Activated B cell treated with CpG ODN at 0.5 μM for 24 hours (primary cell): ENCODE measurements at regions of chr3 and their contacts with region 1.

Region 1: GRCh38 chr3:187066228-187066995 is 72.9 kb downstream of the RPL39L start:
- DNase-seq: no peak
- ATAC-seq: peak; percentile 39
- H3K4me3 Mint-ChIP-seq: peak overlapping the region; percentile 68
- H3K27ac Mint-ChIP-seq: peak overlapping the region; percentile 92
- H3K4me1 Mint-ChIP-seq: peaks cover 97% of the 10 kb centered on the region
- H3K27me3 Mint-ChIP-seq: no peaks in the 10 kb centered on the region
- CTCF ChIP-seq: no peak

Region 2: DNA sequence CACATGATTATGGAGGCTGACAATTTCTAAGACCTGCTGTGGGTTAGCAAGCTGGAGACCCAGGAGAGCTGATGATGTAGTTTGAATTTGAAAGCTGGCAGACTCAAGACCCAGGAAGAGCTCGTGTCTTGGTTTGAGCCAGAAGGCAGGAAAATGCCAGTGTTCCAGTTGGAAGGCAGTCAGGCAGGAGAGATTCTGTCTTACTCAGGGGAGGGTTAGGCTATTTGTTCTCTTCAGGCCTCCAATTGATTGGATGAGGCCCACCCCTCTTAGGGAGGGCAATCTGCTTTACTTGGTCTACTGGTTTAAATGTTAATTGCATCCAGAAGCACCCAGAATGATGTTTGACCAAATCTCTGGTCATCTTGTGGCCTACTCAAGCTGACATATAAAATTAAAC is 1201.2 kb before region 1 on chr3:
- CTCF ChIA-PET with region 1: no interaction called
- POLR2A ChIA-PET with region 1: no interaction called
- intact Hi-C with region 1: no loop called
- DNase-seq: no peak
- ATAC-seq: no peak
- H3K4me3 Mint-ChIP-seq: no peak overlapping the region
- H3K27ac Mint-ChIP-seq: no peak overlapping the region
- H3K4me1 Mint-ChIP-seq: no peaks in the 10 kb centered on the region
- H3K27me3 Mint-ChIP-seq: peaks cover 5% of the 10 kb centered on the region
- CTCF ChIP-seq: no peak

Region 3: DNA sequence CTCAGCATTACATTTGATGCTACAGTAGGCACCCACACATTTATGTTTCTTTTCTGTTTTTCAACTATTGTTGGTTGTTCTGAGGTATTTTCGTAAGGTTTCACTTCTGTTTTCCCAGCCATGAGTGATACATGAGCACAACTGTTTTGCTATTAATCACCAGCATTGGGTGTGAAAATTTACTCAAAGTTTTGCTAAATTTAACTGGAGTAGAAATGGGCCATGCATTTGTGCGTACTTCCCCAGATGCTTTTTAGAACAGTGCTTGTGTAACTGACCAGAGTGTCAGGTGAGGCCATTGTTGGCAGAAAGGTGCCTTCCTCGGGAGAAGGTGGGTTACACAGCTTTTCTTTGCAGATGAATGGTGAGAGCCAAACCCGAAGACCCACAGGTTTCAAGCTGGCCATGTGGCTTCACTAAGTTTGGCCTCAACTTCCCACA is 65.7 kb before region 1 on chr3:
- CTCF ChIA-PET with region 1: no interaction called
- POLR2A ChIA-PET with region 1: interaction called, 6 read pairs
- intact Hi-C with region 1: loop called (anchors 1 kb)
- DNase-seq: peak; percentile 43
- ATAC-seq: peak; percentile 66
- H3K4me3 Mint-ChIP-seq: peak overlapping the region; percentile 72
- H3K27ac Mint-ChIP-seq: peak overlapping the region; percentile 89
- H3K4me1 Mint-ChIP-seq: peaks cover 94% of the 10 kb centered on the region
- H3K27me3 Mint-ChIP-seq: no peaks in the 10 kb centered on the region
- CTCF ChIP-seq: no peak

Region 4: DNA sequence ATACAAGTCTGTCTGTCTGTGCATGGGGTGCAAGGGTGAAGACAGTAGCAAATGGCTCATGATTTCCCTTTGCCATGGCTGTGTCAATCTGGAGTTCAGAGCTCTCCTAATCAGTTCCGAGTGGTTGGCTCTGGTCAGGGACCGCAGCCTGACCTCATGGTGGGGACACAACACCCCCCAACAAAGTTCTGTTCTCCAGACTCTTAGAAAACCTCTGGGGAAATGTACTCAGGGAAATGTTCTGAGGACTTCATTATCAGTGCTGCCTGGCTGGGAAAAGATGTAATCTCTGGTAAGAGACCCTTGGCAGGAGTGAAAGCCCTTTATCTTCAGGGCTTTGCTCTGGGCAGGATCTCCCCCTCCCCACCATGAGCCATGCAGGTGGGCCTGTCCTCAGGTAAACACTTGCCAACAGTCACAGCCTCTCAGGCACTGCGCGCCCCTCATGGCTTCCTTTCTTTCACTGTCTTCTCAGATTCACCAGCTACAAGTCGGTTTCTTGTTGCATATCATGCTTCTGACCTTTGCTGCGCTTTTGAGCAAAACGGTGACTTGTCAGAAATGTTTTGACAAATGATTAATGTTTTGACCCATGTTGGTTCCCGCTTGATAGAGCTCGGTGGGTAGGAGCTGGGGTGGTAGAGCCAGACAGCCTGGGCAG is 40.6 kb before region 1 on chr3:
- CTCF ChIA-PET with region 1: interaction called, 10 read pairs
- POLR2A ChIA-PET with region 1: interaction called, 45 read pairs
- intact Hi-C with region 1: loop called (anchors 1 kb)
- DNase-seq: no peak
- ATAC-seq: peak; percentile 51
- H3K4me3 Mint-ChIP-seq: peak overlapping the region; percentile 84
- H3K27ac Mint-ChIP-seq: peak overlapping the region; percentile 93
- H3K4me1 Mint-ChIP-seq: peaks cover 93% of the 10 kb centered on the region
- H3K27me3 Mint-ChIP-seq: no peaks in the 10 kb centered on the region
- CTCF ChIP-seq: no peak

Region 5: DNA sequence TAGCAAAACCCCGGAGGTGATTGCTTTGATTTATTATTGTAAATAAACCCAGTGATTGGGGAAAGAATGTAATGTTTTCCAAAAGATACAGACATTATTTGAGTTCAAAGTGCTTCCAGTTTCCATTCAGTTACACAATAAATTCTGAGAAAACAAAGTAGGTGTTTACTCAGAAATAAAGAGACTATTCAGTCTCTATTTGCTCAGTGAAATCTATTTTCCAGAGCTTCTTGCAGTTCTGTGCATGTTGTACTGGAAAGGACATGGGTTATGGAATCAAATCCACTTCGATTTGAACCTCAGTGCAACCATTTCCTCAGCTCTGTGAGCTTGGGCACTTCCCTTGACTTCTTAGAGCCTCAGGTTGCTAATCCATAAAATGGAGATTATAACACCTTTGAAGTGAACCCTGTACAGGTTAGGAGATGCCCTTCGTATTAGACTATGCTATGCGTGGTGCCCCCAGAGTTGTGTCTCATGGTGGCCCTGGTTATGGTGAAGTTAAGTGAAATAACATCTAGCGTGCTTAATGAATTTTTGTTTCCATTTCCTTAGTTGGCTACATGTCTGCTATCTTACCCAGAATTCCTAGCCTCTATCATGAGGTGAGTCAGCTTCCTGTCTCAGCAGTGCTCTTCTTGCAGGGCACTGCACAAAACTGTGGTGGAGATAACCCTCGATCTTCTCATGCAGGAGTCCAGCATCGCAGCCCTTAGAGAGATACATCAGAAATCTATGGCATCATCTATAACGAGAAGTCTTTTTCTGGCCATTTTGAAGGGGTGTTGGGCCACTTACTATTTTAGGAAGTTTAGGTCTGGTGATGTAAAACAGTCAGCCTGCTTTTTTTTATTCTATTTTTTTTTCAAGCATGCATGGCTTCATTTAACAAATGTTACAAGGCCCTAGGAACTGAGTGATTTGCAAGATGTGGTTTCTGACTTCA is 24.8 kb before region 1 on chr3:
- CTCF ChIA-PET with region 1: interaction called, 6 read pairs
- POLR2A ChIA-PET with region 1: interaction called, 80 read pairs
- intact Hi-C with region 1: loop called (anchors 1 kb)
- DNase-seq: no peak
- ATAC-seq: peak; percentile 81
- H3K4me3 Mint-ChIP-seq: peak overlapping the region; percentile 74
- H3K27ac Mint-ChIP-seq: peak overlapping the region; percentile 97
- H3K4me1 Mint-ChIP-seq: peaks cover 83% of the 10 kb centered on the region
- H3K27me3 Mint-ChIP-seq: no peaks in the 10 kb centered on the region
- CTCF ChIP-seq: no peak

Region 6: GRCh38 chr3:187082758-187083375 is 16.5 kb after region 1 on chr3:
- CTCF ChIA-PET with region 1: no interaction called
- POLR2A ChIA-PET with region 1: no interaction called
- intact Hi-C with region 1: no loop called
- DNase-seq: no peak
- ATAC-seq: no peak
- H3K4me3 Mint-ChIP-seq: no peak overlapping the region
- H3K27ac Mint-ChIP-seq: peak overlapping the region; percentile 18
- H3K4me1 Mint-ChIP-seq: peaks cover 2% of the 10 kb centered on the region
- H3K27me3 Mint-ChIP-seq: no peaks in the 10 kb centered on the region
- CTCF ChIP-seq: no peak

Region 7: DNA sequence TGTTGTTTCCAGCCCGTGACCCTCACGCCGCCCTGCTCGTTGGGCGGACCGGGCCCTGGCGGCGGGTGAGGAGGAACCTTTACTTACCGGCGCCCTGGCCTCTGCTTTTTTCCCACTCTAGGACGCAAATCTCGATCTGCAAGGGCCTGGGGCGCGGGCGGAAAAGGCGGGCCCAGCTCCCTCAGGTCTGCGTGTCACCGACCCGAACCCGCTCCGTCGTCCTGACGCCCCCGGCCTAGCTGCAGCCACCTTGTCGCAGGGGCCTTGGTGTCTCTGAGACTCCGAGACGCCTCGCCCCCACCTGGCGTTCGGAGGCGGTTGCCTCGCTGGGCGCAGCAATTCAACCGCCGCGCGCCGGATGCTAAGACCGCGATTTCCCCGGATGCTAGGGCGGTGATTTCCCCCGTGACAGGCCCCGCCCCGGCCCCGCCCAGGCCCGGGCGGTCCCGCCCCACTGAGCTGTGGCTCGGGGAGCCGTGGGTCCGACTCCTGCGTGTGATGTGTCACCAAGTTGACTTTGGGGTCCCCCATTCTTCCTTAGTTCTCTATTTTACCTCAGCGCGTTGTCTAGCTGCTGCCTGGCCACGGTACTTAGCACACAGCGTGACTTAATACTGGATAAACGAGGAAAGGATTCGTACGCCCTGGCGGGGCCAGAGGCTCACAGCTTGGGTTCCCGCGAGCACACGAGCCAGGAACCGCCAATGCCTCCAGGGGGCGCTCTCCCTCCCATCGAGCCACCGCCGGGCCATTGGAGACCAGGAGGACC is 72.9 kb after region 1 on chr3 and contains the start of gene RPL39L:
- CTCF ChIA-PET with region 1: interaction called, 12 read pairs
- POLR2A ChIA-PET with region 1: interaction called, 10 read pairs
- intact Hi-C with region 1: loop called (anchors 5 kb)
- DNase-seq: peak; percentile 95
- ATAC-seq: peak; percentile 95
- H3K4me3 Mint-ChIP-seq: peak within 1 kb of the TSS; percentile 90
- H3K27ac Mint-ChIP-seq: peak within 1 kb of the TSS; percentile 95
- H3K4me1 Mint-ChIP-seq: peaks cover 19% of the 10 kb centered on the region
- H3K27me3 Mint-ChIP-seq: no peaks in the 10 kb centered on the region
- CTCF ChIP-seq: no peak
- total RNA-seq, gene RPL39L: 4.7 and 6.9 TPM in 2 replicates